ENCODE measurements at regions of chr3 and their contacts with region 1.

Region 1: DNA sequence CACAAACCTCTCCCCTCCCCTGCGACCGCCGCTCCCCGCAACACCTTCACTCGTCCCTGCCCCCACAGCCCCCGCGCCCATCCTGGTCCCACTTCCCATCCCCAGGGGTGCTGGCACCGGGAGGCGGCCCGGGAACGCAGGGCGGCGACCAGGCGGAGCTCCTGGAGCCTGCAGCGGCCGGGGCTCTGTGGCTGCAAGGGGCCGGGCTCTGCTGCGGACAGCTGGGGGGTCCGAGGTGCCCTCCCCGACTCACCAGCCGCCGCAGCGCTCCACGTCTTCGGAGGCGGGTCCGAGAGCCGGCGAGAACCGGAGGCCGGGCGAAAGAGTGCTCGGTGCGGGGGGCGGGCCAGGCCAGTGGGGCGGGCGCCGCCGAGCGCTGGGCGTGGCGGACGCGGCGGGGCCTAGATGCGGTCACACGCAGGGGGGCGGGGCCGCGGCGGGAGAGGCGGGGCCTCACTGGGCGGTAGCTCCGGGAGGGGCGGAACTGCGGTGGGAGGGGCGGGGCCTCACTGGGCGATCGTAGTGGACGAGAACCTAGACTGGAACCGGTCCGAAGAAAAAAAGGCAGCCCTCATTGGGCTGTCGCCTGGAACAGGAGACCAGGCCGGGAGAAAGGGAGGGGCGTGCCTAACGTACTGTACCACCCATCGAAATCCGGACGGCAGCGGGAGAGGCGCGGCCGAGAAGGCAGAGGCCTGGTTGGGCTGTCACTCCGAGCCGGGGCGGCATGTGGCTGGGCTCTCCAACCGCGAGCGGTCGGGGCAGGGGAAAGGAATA is at the start of gene ANO10:
- DNase-seq: peak; percentile 98 to 100 (median 100)
- H3K4me3 ChIP-seq: peak within 1 kb of the TSS; percentile 99
- H3K27ac ChIP-seq: peak within 1 kb of the TSS; percentile 73 to 90
- H3K4me1 ChIP-seq: no peaks in the 10 kb centered on the region
- H3K27me3 ChIP-seq: no peaks in the 10 kb centered on the region
- CTCF ChIP-seq: no peak
- EP300 ChIP-seq: no peak
- POLR2A ChIP-seq: peak; percentile 41
- total RNA-seq, gene ANO10: 12.2 to 37.2 (median 21.7) TPM

Region 2: GRCh38 chr3:43690400-43691119 is 68.7 kb after region 1 on chr3 and contains the start of gene ABHD5:
- intact Hi-C with region 1: loop called in 1 of 4 experiments (anchors 10 kb)
- DNase-seq: peak; percentile 86 to 95 (median 91)
- H3K4me3 ChIP-seq: peak within 1 kb of the TSS; percentile 79
- H3K27ac ChIP-seq: peak within 1 kb of the TSS; percentile 65 to 80
- H3K4me1 ChIP-seq: peaks cover 6% of the 10 kb centered on the region
- H3K27me3 ChIP-seq: no peaks in the 10 kb centered on the region
- CTCF ChIP-seq: peak in 1 of 3 donors; percentile 31
- EP300 ChIP-seq: no peak
- POLR2A ChIP-seq: peak; percentile 97
- total RNA-seq, gene ABHD5: 8.9 to 14.1 (median 11.3) TPM

Measured in ovary (tissue), 10 donors.